GM12878 (cell line): ENCODE measurements at regions of chr20 and their contacts with region 1.

Region 1: GRCh38 chr20:53934421-53935343 is 135.7 kb downstream of the BCAS1 start:
- DNase-seq: no peak
- ATAC-seq: peak; percentile 77
- H3K4me3 ChIP-seq: peak overlapping the region; percentile 33; the same call in 1 of the 2 replicates
- H3K27ac ChIP-seq: peak overlapping the region; percentile 91
- H3K4me1 ChIP-seq: peaks cover 52% of the 10 kb centered on the region
- H3K27me3 ChIP-seq: no peaks in the 10 kb centered on the region
- CTCF ChIP-seq: 0 out of 6 replicates have a peak, but pooled peaks of 1 of the 3 experiments have one; percentile 4
- EP300 ChIP-seq: no peak
- POLR2A ChIP-seq: 0 out of 2 replicates have a peak, but pooled peaks have one; percentile 4
- RAD21 ChIP-seq: 0 out of 2 replicates have a peak, but pooled peaks have one; percentile 12

Region 2: GRCh38 chr20:53238121-53238660 is 696.5 kb before region 1 on chr20:
- CTCF ChIA-PET with region 1: no interaction called
- POLR2A ChIA-PET with region 1: no interaction called
- RAD21 ChIA-PET with region 1: no interaction called
- SMC1A ChIA-PET with region 1: no interaction called
- in situ Hi-C with region 1: no loop called
- intact Hi-C with region 1: no loop called
- DNase-seq: no peak
- ATAC-seq: no peak
- H3K4me3 ChIP-seq: no peak overlapping the region
- H3K27ac ChIP-seq: no peak overlapping the region
- H3K4me1 ChIP-seq: no peaks in the 10 kb centered on the region
- H3K27me3 ChIP-seq: no peaks in the 10 kb centered on the region
- CTCF ChIP-seq: no peak
- EP300 ChIP-seq: no peak
- POLR2A ChIP-seq: no peak
- RAD21 ChIP-seq: no peak

Region 3: DNA sequence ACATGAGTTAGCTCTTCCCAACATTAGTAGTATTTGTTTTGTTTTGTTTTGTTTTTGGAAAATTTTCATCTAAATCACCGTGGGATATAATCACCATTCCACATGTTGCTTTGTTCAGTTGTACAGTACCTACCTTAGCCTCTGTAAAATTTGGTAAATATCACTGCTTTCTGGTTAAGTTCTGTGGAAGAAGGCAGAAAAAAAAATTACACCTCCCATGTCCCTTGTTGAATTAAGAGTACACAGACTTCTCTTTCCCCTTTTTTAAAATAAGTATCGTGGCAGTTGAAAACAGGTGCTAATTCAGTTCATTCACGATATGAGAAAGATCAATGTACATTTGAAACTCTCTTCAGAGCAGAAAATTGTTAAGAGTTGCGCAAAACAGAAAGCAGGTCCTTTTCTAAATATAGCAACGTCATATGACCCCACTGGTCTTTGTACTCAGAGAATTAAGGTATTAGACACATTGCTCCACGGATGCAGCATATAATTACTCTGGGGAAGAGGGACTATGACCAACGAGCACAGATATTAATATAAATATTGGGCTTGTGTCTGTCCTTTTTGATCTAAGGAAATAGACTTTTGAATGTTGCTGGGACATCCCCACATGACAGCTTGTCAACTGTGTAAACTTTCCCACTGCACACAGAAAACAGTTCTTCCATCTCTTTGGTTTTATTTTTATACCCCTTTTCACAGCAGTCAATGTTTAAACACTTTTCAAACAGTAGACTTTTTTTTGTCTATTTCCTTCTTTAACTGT is 282.4 kb before region 1 on chr20:
- CTCF ChIA-PET with region 1: interaction called, 5 read pairs
- POLR2A ChIA-PET with region 1: interaction called, 3 read pairs
- RAD21 ChIA-PET with region 1: interaction called, 6 read pairs
- SMC1A ChIA-PET with region 1: interaction called, 8 read pairs
- in situ Hi-C with region 1: no loop called
- intact Hi-C with region 1: loop called (anchors 5 kb)
- DNase-seq: peak; percentile 93
- ATAC-seq: peak; percentile 76
- H3K4me3 ChIP-seq: peak overlapping the region; percentile 30; the same call in 1 of the 2 replicates
- H3K27ac ChIP-seq: peak overlapping the region; percentile 99
- H3K4me1 ChIP-seq: peaks cover 39% of the 10 kb centered on the region
- H3K27me3 ChIP-seq: no peaks in the 10 kb centered on the region
- CTCF ChIP-seq: no peak
- EP300 ChIP-seq: peak; percentile 68 to 72; a peak in 2 of 4 replicates
- POLR2A ChIP-seq: no peak
- RAD21 ChIP-seq: peak; percentile 17; the same call in 1 of the 2 replicates

Region 4: DNA sequence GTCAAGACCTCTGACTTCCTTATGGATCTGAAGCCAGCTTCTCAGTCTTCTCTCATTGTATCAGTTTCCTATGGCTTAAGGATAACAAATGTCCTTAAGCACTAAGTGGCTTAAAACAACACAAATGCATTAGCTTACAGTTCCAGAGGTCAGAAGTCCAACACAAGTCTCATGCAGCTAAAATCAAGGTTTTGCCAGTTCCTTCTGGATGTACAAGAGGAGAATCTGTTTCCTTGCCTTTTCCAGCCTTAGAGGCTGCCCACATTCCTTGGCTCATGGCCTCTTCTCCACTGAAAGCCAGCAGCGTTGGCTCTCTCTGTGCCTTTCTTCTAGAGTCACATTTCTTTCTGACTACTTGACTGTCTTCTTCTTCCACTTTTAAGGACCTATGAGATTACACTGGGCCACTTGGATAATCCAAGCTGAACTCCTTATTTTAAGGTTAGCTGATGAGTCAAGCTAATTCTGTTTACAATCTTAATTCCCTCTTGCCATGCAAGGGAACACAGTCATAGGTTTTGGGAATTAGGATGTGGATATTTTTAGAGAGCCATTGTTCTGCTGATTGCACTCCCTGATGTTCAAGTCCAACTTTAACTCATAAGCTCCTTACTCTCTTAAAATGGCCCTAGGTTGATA is 43.3 kb before region 1 on chr20:
- CTCF ChIA-PET with region 1: interaction called, 8 read pairs
- POLR2A ChIA-PET with region 1: interaction called, 5 read pairs
- RAD21 ChIA-PET with region 1: interaction called, 12 read pairs
- SMC1A ChIA-PET with region 1: interaction called, 11 read pairs
- in situ Hi-C with region 1: no loop called
- intact Hi-C with region 1: no loop called
- DNase-seq: no peak
- ATAC-seq: no peak
- H3K4me3 ChIP-seq: no peak overlapping the region
- H3K27ac ChIP-seq: no peak overlapping the region
- H3K4me1 ChIP-seq: peaks cover 25% of the 10 kb centered on the region
- H3K27me3 ChIP-seq: no peaks in the 10 kb centered on the region
- CTCF ChIP-seq: no peak
- EP300 ChIP-seq: no peak
- POLR2A ChIP-seq: no peak
- RAD21 ChIP-seq: no peak

Region 5: GRCh38 chr20:53905019-53905847 is 29.4 kb before region 1 on chr20:
- CTCF ChIA-PET with region 1: interaction called, 24 read pairs
- POLR2A ChIA-PET with region 1: interaction called, 3 read pairs
- RAD21 ChIA-PET with region 1: interaction called, 25 read pairs
- SMC1A ChIA-PET with region 1: interaction called, 49 read pairs
- in situ Hi-C with region 1: no loop called
- intact Hi-C with region 1: no loop called
- DNase-seq: no peak
- ATAC-seq: peak; percentile 51
- H3K4me3 ChIP-seq: 0 out of 2 replicates have a peak overlapping the region, but pooled peaks have one; percentile 15
- H3K27ac ChIP-seq: peak overlapping the region; percentile 72
- H3K4me1 ChIP-seq: peaks cover 43% of the 10 kb centered on the region
- H3K27me3 ChIP-seq: no peaks in the 10 kb centered on the region
- CTCF ChIP-seq: no peak
- EP300 ChIP-seq: peak in 1 of 2 experiments; percentile 50; a peak in 1 of 4 replicates
- POLR2A ChIP-seq: no peak
- RAD21 ChIP-seq: no peak